HCT116 (cell line): ENCODE measurements at regions of chr18 and their contacts with region 1.

Region 1: GRCh38 chr18:32427084-32427900 is 43.4 kb downstream of the GAREM1 start:
- DNase-seq: no peak
- ATAC-seq: no peak
- H3K4me3 ChIP-seq: no peak overlapping the region
- H3K27ac ChIP-seq: no peak overlapping the region
- H3K4me1 ChIP-seq: no peaks in the 10 kb centered on the region
- H3K27me3 ChIP-seq: no peaks in the 10 kb centered on the region
- CTCF ChIP-seq: no peak
- POLR2A ChIP-seq: no peak
- RAD21 ChIP-seq: no peak

Region 2: GRCh38 chr18:32373995-32374394 is 53.3 kb before region 1 on chr18:
- CTCF ChIA-PET with region 1: no interaction called
- POLR2A ChIA-PET with region 1: no interaction called
- RAD21 ChIA-PET with region 1: no interaction called
- intact Hi-C with region 1: no loop called
- DNase-seq: peak; percentile 53
- ATAC-seq: peak; percentile 23; the same call in 1 of the 2 replicates
- H3K4me3 ChIP-seq: peak overlapping the region in 1 of 2 experiments; percentile 7; a peak in 1 of 4 replicates
- H3K27ac ChIP-seq: peak overlapping the region; percentile 65; the same call in 1 of the 2 replicates
- H3K4me1 ChIP-seq: peaks cover 37 to 39% of the 10 kb centered on the region in 2 experiments
- H3K27me3 ChIP-seq: no peaks in the 10 kb centered on the region
- CTCF ChIP-seq: no peak
- POLR2A ChIP-seq: no peak
- RAD21 ChIP-seq: no peak

Region 3: GRCh38 chr18:32439802-32440201 is 12.5 kb after region 1 on chr18:
- CTCF ChIA-PET with region 1: interaction called, 10 read pairs
- POLR2A ChIA-PET with region 1: no interaction called
- RAD21 ChIA-PET with region 1: no interaction called
- intact Hi-C with region 1: no loop called
- DNase-seq: peak; percentile 15
- ATAC-seq: peak; percentile 91
- H3K4me3 ChIP-seq: no peak overlapping the region
- H3K27ac ChIP-seq: no peak overlapping the region
- H3K4me1 ChIP-seq: no peaks in the 10 kb centered on the region
- H3K27me3 ChIP-seq: no peaks in the 10 kb centered on the region
- CTCF ChIP-seq: peak; percentile 13 to 68 (median 63); a peak in 4 of 6 replicates
- POLR2A ChIP-seq: no peak
- RAD21 ChIP-seq: no peak

Region 4: GRCh38 chr18:32450874-32451273 is 23.6 kb after region 1 on chr18:
- CTCF ChIA-PET with region 1: no interaction called
- POLR2A ChIA-PET with region 1: no interaction called
- RAD21 ChIA-PET with region 1: no interaction called
- intact Hi-C with region 1: no loop called
- DNase-seq: no peak
- ATAC-seq: no peak
- H3K4me3 ChIP-seq: no peak overlapping the region
- H3K27ac ChIP-seq: no peak overlapping the region
- H3K4me1 ChIP-seq: no peaks in the 10 kb centered on the region
- H3K27me3 ChIP-seq: no peaks in the 10 kb centered on the region
- CTCF ChIP-seq: no peak
- POLR2A ChIP-seq: no peak
- RAD21 ChIP-seq: no peak